Psoas muscle (tissue), 8 donors: ENCODE measurements at regions of chr14 and their contacts with region 1.

Region 1: DNA sequence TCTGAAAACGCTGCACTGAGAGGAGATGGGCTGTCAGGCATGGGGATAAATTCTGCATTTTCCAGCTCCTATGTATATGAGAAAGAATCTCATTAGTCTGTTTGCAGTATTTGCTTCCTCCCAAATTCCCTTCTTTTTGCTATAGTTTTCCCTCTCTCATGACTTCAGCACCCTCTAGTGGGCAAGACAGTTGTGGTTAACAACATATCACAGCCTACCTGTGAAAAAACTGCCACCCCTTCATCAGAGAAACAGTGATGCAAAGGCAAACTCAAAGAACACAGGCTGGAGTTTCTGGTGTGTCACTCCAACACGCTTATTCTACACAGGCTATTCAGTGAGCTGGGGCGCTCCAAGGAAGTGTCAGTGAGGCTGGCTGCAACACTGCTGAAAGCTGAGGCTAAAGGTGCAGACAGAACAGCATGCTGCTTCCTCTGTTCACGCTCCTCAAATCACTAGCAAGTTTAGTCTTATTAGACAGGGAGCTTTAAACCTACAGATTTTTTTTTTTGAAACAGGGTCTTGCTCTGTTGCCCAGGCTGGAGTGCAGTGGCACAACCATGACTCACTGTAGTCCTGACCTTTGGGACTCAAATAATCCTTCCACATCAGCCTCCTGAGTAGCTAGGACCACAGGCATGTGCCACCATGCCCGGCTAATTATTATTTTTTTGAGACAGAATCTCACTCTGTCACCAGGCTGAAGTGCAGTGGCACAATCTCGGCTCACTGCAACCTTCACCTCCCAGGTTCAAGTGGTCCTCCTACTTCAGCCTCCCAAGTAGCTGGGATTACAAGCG is 19.3 kb downstream of the ZC2HC1C start:
- DNase-seq: no peak
- ATAC-seq: peak; percentile 67 to 82 (median 70)
- H3K4me3 ChIP-seq: no peak overlapping the region
- H3K27ac ChIP-seq: no peak overlapping the region
- H3K4me1 ChIP-seq: no peaks in the 10 kb centered on the region
- H3K27me3 ChIP-seq: no peaks in the 10 kb centered on the region
- CTCF ChIP-seq: peak; percentile 76

Region 2: GRCh38 chr14:74860906-74861733 is 227.7 kb before region 1 on chr14:
- intact Hi-C with region 1: loop called (anchors 2 to 5 kb)
- DNase-seq: peak; percentile 90 to 94
- ATAC-seq: peak; percentile 63 to 81 (median 71)
- H3K4me3 ChIP-seq: no peak overlapping the region
- H3K27ac ChIP-seq: no peak overlapping the region
- H3K4me1 ChIP-seq: peaks cover 8% of the 10 kb centered on the region
- H3K27me3 ChIP-seq: no peaks in the 10 kb centered on the region
- CTCF ChIP-seq: peak; percentile 86

Region 3: DNA sequence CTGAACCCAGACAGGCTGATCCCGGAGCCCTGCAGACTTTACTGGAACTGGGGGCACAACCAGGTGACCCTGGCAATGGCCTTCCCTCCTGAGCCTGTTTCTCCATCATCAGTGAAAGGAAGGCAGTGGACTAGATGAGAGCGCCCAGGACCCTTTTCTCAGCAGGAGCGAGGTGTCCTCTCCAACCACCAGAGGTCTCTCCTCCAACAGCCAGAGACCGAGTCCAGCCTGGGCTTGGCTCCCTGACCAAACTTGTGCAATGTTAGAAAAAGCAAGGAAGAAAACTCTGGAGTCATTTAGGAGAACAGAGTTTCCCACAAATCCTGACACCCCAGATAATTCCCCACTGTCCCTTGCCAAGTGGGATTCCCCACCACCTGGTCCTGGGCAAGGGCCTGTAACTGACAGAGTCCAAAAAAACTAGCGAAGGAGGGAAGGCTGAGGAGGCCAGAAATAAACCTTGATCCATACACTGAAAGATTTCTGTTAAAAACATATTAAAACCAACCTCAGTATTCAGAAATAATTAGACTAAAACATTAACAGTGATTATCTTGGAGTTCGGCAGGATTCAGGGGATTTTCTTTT is 174.7 kb before region 1 on chr14:
- intact Hi-C with region 1: loop called (anchors 1 to 2 kb)
- DNase-seq: peak; percentile 77 to 87
- ATAC-seq: peak; percentile 45 to 72 (median 67)
- H3K4me3 ChIP-seq: no peak overlapping the region
- H3K27ac ChIP-seq: peak overlapping the region; percentile 3
- H3K4me1 ChIP-seq: peaks cover 35% of the 10 kb centered on the region
- H3K27me3 ChIP-seq: no peaks in the 10 kb centered on the region
- CTCF ChIP-seq: peak; percentile 81

Region 4: GRCh38 chr14:74945823-74946682 is 142.7 kb before region 1 on chr14:
- intact Hi-C with region 1: loop called (anchors 2 to 10 kb)
- DNase-seq: peak; percentile 78 to 85
- ATAC-seq: peak; percentile 82 to 91 (median 86)
- H3K4me3 ChIP-seq: no peak overlapping the region
- H3K27ac ChIP-seq: no peak overlapping the region
- H3K4me1 ChIP-seq: peaks cover 15% of the 10 kb centered on the region
- H3K27me3 ChIP-seq: no peaks in the 10 kb centered on the region
- CTCF ChIP-seq: peak; percentile 89

Region 5: DNA sequence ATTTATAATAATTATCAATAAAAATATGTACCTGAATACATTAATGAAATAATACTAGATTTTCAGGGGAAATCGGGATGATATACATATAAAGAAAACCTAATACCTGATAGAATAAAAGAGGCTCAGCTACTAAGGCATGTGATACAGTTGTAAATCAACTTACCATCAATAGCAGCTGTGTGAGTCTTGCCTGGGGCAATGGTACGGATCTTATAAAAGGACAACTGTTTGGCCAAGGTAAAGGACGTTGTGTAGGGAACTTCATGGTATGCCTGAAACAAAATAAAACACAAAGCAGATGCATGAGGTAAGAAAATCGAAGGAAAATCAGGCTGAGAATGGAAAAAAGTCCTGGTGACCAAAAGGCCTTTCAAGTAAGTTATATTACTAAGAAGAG is 12.7 kb after region 1 on chr14:
- intact Hi-C with region 1: no loop called
- DNase-seq: no peak
- ATAC-seq: no peak
- H3K4me3 ChIP-seq: no peak overlapping the region
- H3K27ac ChIP-seq: peak overlapping the region; percentile 16
- H3K4me1 ChIP-seq: peaks cover 15% of the 10 kb centered on the region
- H3K27me3 ChIP-seq: no peaks in the 10 kb centered on the region
- CTCF ChIP-seq: no peak